CD8-positive, alpha-beta memory T cell (primary cell): ENCODE measurements at regions of chr1 and their contacts with region 1.

Region 1: GRCh38 chr1:2412519-2413233 is at the start of gene PEX10:
- DNase-seq: peak; percentile 98 to 99 (median 98)
- H3K4me3 ChIP-seq: peak within 1 kb of the TSS; percentile 78
- H3K4me3 Mint-ChIP-seq: peak within 1 kb of the TSS; percentile 79 to 94 (median 87)
- H3K27ac ChIP-seq: peak within 1 kb of the TSS; percentile 90
- H3K27ac Mint-ChIP-seq: peak within 1 kb of the TSS; percentile 81 to 97 (median 88)
- H3K4me1 ChIP-seq: peaks cover 52% of the 10 kb centered on the region
- H3K4me1 Mint-ChIP-seq: peaks cover 30 to 51% (median 30%) of the 10 kb centered on the region in 3 donors
- H3K27me3 ChIP-seq: no peaks in the 10 kb centered on the region
- H3K27me3 Mint-ChIP-seq: no peaks in the 10 kb centered on the region
- total RNA-seq, gene PEX10: 25.6 to 26.2 TPM

Region 2: DNA sequence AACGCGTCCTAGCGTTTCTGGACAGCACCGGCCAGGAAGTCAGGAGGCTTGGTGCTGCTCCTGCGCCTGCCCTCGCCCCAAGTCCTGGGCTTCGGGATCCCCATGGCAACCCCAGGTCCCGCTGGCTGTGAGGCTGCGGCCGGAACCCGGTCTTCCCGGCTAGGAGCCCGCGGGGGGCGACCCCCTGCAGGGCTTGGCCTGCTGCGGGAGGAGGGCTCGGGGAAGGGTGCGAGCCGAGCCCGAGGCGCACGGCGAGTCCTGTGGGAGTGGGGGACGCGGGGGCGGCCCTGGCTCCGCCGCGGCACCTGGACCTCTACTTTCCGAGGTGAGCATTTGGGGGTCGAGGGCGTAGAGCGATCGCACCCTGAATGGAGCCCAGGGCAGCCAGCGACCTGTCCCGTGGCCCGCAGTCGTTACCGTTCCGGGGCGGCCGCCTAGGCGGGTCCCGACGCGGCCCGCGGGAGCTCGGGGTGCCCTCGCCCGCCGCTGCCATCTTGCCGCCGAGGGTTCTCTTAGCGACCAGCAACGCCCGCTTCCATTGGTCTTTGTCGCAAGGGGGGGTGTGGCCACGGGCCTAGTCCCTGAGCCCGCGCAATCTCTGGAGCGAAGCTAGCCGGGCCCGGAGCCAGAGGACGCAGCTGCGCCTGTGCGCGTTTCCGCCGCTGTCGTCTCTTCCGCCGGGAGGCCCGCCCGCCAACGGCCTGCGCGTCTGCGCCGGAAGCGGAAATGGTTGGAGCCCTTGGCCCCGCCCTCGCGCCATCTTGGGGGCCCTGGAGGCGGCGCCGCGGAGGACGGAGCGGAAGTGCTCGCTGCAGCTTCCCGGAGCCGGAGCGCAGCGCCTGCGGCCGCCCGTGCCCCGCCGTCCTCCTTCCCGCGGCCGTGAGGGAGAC is 21.4 kb before region 1 on chr1 and contains the starts of genes MORN1 and RER1:
- CTCF ChIA-PET with region 1: interaction called, 6 read pairs
- POLR2A ChIA-PET with region 1: interaction called, 10 read pairs
- DNase-seq: peak; percentile 98 to 99 (median 99)
- H3K4me3 ChIP-seq: peak within 1 kb of the TSS; percentile 73
- H3K4me3 Mint-ChIP-seq: peak within 1 kb of the TSS; percentile 87 to 98 (median 90)
- H3K27ac ChIP-seq: peak within 1 kb of the TSS; percentile 82
- H3K27ac Mint-ChIP-seq: peak within 1 kb of the TSS; percentile 84 to 98 (median 92)
- H3K4me1 ChIP-seq: peaks cover 34% of the 10 kb centered on the region
- H3K4me1 Mint-ChIP-seq: peaks cover 27 to 49% (median 34%) of the 10 kb centered on the region in 3 donors
- H3K27me3 ChIP-seq: no peaks in the 10 kb centered on the region
- H3K27me3 Mint-ChIP-seq: no peaks in the 10 kb centered on the region
- total RNA-seq, gene MORN1: 9.4 to 10.4 TPM
- total RNA-seq, gene RER1: 214 to 222 TPM

Region 3: GRCh38 chr1:2525920-2526823 is 113.5 kb after region 1 on chr1 and contains the start of gene PANK4:
- CTCF ChIA-PET with region 1: interaction called, 19 read pairs
- POLR2A ChIA-PET with region 1: interaction called, 14 read pairs
- DNase-seq: peak; percentile 79 to 90 (median 85)
- H3K4me3 ChIP-seq: peak within 1 kb of the TSS; percentile 93
- H3K4me3 Mint-ChIP-seq: peak within 1 kb of the TSS; percentile 88 to 99 (median 90)
- H3K27ac ChIP-seq: peak within 1 kb of the TSS; percentile 62
- H3K27ac Mint-ChIP-seq: peak within 1 kb of the TSS; percentile 86 to 98 (median 97)
- H3K4me1 ChIP-seq: peaks cover 57% of the 10 kb centered on the region
- H3K4me1 Mint-ChIP-seq: peaks cover 40 to 69% (median 44%) of the 10 kb centered on the region in 3 donors
- H3K27me3 ChIP-seq: peaks cover 7% of the 10 kb centered on the region
- H3K27me3 Mint-ChIP-seq: peaks cover 9 to 11% of the 10 kb centered on the region in 2 donors
- total RNA-seq, gene PANK4: 40.3 to 46.3 TPM